Mammary epithelial cell (primary cell): ENCODE measurements at regions of chr1 and their contacts with region 1.

Region 1: DNA sequence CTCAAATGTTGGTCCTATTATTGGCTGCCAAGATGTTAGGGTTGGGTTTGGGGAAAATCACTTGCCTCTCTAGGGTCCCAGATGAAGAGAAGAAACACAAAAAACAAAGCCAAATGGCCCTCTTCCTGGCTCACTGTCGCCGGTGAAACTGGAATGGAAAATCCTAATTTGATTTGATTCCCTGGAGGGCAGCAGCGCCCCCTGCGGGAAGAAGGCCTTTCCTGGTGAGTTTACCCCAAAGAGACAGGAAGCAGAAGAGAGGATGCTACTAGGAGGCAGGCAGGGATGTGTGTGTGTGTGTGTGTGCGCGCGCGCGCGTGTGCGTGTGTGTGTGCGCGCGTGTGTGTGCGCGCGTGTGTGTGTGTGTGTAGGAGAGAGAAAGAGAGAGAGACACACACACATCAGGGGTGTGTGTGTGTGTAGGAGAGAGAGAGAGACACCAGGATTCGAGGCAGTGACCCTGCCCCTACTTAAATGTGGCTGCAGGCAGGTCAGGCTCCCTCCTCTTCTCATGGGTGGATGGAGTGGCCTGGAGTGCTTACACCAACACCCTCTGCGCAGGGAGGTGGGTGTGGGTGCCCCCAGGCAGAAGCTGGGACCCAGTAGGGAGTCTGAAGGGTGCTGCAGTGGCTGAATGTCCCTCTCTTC is 3.1 kb upstream of the SELENON start:
- DNase-seq: peak; percentile 59
- H3K4me3 ChIP-seq: no peak overlapping the region
- H3K27ac ChIP-seq: no peak overlapping the region
- H3K4me1 ChIP-seq: peaks cover 15% of the 10 kb centered on the region
- H3K27me3 ChIP-seq: no peaks in the 10 kb centered on the region
- CTCF ChIP-seq: peak; percentile 74 to 89

Region 2: DNA sequence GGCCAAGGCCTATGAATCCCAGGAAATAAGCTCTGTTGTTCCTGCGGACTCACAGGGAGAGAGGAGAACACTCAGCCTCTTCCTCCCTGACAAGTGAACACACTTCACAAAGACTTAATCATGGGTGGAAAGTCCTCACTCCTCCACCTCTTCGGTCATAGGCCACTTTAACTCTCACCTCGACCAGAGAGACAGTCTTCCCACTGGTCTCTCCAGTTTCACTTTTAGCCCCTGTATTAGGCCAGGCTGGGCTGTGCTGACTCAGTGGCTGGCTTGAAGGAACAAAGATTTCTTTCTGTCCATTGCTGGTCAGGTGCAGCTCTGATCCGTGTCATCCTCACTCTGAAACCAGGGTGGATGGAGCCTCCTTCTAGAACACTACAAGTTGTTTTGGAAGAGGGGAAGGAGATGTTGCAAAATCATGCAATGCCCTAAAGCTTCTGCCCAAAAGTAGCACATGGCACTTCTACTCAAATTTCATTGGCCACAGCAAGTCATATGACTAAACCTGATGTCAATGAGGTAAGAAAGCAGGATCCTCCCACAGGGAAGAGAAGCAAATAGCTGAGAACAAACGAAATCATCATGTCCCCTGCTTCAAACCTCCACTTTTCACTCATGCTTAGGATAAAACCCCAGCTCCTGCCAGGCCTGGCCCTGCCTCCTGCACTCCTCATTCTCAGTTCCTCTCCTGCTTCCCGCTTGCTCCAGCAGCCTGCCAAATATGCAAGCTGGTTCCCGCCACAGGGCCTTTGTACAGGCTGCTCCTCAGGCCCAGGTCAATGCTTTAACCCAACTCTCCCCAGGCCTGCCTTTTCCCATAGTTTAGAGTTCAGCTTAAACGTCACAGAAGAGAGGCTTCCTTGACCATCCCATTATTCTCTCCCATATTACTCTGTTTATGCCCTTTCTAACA is 716.4 kb before region 1 on chr1:
- CTCF ChIA-PET with region 1: no interaction called
- dilution Hi-C with region 1: no loop called
- in situ Hi-C with region 1: no loop called
- intact Hi-C with region 1: no loop called
- DNase-seq: peak; percentile 56
- H3K4me3 ChIP-seq: no peak overlapping the region
- H3K27ac ChIP-seq: no peak overlapping the region
- H3K4me1 ChIP-seq: no peaks in the 10 kb centered on the region
- H3K27me3 ChIP-seq: no peaks in the 10 kb centered on the region
- CTCF ChIP-seq: no peak

Region 3: DNA sequence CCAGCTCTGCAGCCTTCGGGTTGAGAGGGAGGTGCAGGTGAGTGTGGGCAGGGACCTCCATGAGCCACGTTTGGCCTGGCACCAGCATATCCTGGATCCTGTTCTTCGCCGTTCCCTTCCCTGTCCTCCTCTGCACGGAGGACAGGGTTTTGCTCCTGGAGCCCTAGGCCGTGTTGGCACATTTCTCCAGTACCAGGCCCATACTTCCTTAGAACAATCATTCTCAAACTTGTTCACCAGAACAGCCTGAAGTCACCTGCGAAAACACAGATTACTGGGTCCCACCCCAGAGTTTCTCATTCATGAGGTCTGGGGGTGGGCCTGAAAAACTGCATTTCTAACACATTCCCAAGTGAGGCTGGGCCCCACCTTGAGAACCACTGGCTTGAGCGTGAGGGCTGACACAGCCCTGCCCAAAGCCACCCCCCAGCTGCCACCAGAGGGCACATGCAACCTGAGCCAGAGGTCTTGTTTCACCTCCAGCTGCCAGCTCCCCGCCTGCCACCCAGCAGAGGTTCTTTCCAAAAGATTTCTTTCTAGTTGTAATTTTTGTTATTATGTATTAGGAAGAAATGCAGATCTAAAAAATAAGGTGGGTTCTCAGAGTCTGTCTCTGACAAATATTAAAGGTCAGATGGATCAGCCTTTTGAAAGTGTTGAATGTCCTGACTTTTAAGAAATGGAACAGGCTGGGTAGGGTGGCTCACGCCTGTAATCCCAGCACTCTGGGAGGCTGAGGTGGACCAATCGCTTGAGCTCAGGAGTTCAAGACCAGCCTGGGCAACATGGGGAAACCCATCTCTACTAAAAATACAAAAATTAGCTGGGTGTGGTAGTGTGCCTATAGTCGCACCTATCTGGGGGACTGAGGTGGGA is 293.1 kb before region 1 on chr1:
- CTCF ChIA-PET with region 1: no interaction called
- dilution Hi-C with region 1: no loop called
- in situ Hi-C with region 1: no loop called
- intact Hi-C with region 1: loop called (anchors 2 kb)
- DNase-seq: peak; percentile 21
- H3K4me3 ChIP-seq: no peak overlapping the region
- H3K27ac ChIP-seq: no peak overlapping the region
- H3K4me1 ChIP-seq: no peaks in the 10 kb centered on the region
- H3K27me3 ChIP-seq: no peaks in the 10 kb centered on the region
- CTCF ChIP-seq: peak; percentile 56 to 75

Region 4: GRCh38 chr1:25608488-25609178 is 188.3 kb before region 1 on chr1:
- CTCF ChIA-PET with region 1: interaction called, 5 read pairs
- dilution Hi-C with region 1: no loop called
- in situ Hi-C with region 1: loop called (anchors 5 kb)
- intact Hi-C with region 1: loop called (anchors 1 kb)
- DNase-seq: peak; percentile 45
- H3K4me3 ChIP-seq: peak overlapping the region in 2 of 3 experiments; percentile 38 to 43
- H3K27ac ChIP-seq: no peak overlapping the region
- H3K4me1 ChIP-seq: peaks cover 3% of the 10 kb centered on the region
- H3K27me3 ChIP-seq: no peaks in the 10 kb centered on the region
- CTCF ChIP-seq: peak; percentile 17 to 65

Region 5: DNA sequence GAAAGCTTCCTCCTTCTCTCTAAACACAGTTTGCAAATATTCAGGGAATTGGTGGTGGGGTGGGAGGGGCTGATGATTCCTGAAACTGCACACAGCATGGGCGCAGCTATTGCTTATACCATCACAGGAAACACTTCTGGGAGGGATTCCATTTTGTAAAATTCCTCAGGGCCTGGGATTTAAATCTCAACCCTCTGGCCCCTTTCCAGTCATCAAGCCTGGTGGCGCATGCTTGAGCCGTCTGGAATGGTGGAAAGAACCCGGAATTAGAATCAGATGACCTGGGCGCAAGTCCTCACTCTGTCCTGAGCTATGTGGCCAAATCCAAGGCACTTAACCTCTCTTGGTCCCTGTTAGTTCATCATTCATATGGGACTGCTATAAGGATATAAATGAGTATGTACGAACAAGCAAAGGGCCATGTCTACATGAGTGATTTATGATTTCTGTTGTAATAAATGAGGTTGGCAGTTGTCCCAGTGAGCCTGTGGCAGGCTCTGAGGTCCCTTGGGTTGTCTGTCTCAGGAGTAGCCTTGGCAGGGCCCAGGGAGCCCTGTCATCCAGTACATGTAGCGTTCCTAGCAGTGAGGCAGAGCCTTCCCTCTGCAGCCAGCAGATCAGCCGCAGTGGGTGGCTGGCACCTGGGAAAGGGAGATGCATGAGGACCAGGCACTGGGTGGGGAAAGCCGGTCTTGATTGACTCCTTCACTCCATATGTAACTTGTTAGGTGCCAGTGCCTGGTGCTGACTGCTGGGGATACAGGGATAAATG is 108.4 kb before region 1 on chr1:
- CTCF ChIA-PET with region 1: no interaction called
- dilution Hi-C with region 1: no loop called
- in situ Hi-C with region 1: no loop called
- intact Hi-C with region 1: loop called (anchors 5 kb)
- DNase-seq: no peak
- H3K4me3 ChIP-seq: no peak overlapping the region
- H3K27ac ChIP-seq: no peak overlapping the region
- H3K4me1 ChIP-seq: no peaks in the 10 kb centered on the region
- H3K27me3 ChIP-seq: no peaks in the 10 kb centered on the region
- CTCF ChIP-seq: no peak

Region 6: DNA sequence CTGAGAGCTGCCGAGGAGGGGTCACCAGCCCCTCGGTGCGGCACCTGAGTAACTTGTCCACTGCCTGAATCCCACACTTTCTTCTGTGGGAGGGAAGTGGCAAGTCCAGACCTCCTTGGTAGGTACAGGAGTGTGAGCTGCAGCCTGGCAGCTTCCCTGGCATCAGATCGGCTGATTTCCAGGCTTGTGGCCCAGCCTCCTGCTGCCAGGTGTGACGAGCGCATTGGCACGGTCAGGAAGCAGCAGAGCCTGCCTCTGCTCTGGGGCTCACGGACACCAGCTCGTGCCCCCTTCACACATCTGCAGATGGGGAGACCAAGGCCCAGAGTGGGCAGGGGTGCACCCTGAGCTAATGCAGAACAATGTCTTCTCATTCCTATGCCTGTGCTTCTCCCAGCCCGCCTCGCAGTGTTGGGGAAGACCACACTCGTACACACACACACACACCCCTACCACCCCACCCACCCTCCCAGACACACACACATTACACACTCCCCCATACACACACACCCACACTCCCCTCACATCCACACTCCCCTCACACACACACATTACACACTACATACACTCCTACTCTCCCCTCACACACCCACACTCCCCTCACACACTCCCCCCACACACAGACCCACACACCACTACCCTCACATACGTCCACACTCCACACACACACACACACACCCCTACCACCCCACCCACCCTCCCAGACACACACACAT is 30.1 kb before region 1 on chr1:
- CTCF ChIA-PET with region 1: no interaction called
- dilution Hi-C with region 1: loop called (anchors 5 kb)
- in situ Hi-C with region 1: no loop called
- intact Hi-C with region 1: no loop called
- DNase-seq: no peak
- H3K4me3 ChIP-seq: no peak overlapping the region
- H3K27ac ChIP-seq: no peak overlapping the region
- H3K4me1 ChIP-seq: no peaks in the 10 kb centered on the region
- H3K27me3 ChIP-seq: no peaks in the 10 kb centered on the region
- CTCF ChIP-seq: no peak

Region 7: DNA sequence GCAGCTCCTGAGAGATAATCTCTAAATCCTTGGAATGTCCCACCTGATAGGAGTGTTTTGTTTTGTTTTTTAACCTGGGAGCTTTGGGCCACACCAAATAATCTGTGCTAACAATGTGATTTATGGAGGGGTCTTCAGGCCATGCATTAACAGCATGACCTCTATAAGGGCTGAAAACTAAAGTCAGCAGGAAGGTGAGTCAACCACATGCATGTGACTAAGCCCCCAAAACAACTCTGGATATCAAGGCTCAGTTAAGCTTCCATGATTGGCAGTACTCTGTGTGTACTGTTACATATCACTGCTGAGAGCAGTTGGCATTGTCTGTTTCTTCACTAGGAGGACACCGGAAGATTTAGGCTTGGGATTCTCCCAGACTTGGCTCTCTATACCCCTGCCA is 51.6 kb after region 1 on chr1:
- CTCF ChIA-PET with region 1: no interaction called
- dilution Hi-C with region 1: no loop called
- in situ Hi-C with region 1: no loop called
- intact Hi-C with region 1: no loop called
- DNase-seq: no peak
- H3K4me3 ChIP-seq: no peak overlapping the region
- H3K27ac ChIP-seq: no peak overlapping the region
- H3K4me1 ChIP-seq: no peaks in the 10 kb centered on the region
- H3K27me3 ChIP-seq: no peaks in the 10 kb centered on the region
- CTCF ChIP-seq: no peak